ENCODE measurements at regions of chr12 and their contacts with region 1.

Region 1: DNA sequence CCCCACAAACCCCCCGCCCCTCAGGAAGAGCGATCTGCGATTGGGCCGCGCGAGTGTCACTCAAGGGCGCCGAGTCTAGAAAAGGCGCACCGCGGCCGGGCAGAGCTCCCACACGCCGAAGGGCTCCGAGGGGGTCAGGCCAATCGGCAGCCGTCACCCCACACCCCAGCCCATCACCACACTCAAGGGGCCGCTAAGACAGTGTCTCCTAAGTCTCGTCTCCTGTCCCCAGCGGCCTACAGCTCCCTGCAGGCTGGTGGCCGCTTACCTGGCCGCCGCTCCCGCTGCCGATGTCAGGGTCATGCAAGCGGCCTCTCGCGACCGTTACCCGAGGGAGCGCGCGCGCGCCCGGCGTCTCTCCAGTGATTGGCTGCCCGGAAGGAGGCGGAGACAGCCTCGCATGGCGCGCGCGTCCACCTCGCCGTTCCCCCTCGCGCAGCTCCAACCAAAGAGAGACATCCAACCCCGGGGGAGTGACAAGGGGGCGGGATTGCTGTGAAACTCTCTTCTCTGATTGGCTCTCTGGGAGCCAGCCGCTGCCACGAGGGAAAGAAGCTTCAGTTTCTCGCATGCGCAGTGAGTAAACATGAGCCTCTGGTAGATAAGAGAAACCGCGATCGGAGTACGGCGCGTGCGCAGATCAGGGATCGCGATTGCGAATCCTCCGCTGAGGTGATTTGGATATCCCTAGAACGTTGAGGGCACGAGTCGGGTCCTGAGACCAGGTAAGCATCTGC is at the starts of genes MPHOSPH9 and MTRFR:
- DNase-seq: peak; percentile 100
- H3K4me3 Mint-ChIP-seq: peak within 1 kb of the TSS; percentile 84
- H3K27ac Mint-ChIP-seq: peak within 1 kb of the TSS; percentile 82
- H3K4me1 Mint-ChIP-seq: peaks cover 24% of the 10 kb centered on the region
- H3K27me3 Mint-ChIP-seq: no peaks in the 10 kb centered on the region
- CTCF ChIP-seq: no peak
- total RNA-seq, gene MPHOSPH9: 27.5 and 40.4 TPM in 2 replicates
- total RNA-seq, gene MTRFR: 21.9 and 26.5 TPM in 2 replicates

Region 2: DNA sequence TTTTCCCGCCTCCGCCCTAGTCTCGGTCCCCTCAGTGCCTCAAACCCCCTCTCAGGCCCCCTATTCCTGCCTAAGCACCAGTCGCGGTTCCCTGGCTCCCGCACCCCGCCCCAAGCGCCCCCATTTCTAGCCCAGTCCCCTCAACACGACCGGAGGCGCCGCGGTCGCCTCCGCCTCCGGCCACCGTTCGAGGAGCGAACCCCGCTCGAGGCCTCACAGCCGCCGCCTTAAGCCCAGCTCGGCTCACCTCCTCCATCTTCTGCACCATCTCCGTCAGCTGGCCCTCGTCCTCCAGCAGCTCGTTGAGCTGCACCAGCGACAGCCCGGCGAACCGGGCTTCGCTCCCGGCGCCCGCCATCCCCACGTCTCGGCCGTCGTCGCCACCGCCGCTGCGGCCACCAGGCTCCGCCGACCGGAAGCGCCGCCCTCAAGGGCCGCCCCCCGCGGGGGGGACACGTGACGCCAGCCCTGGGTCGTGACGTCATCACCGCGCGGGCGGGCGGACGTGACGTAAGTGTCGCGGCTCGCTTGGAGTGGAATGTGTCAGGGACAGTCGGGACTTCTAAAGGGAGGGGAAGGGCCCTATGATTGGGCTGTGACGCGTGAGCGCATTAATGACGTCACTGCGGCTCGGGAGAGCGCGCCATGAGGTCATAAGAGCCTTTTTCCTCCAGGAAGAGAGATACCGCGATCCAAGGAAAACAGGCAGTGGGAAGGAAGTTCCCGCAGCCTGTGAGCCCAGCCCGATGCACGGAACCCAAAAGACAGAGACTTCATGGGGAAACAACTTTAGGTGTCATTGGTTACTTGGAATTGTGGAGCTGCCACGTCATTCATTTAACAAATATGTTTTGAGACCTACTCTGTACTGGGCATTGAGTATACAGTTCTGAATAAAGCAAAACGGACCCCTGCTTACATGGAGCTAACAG is 337.0 kb before region 1 on chr12 and contains the start of gene VPS37B:
- CTCF ChIA-PET with region 1: interaction called, 3 read pairs
- POLR2A ChIA-PET with region 1: interaction called, 13 read pairs
- intact Hi-C with region 1: no loop called
- DNase-seq: peak; percentile 63
- H3K4me3 Mint-ChIP-seq: peak within 1 kb of the TSS; percentile 88
- H3K27ac Mint-ChIP-seq: peak within 1 kb of the TSS; percentile 91
- H3K4me1 Mint-ChIP-seq: peaks cover 35% of the 10 kb centered on the region
- H3K27me3 Mint-ChIP-seq: no peaks in the 10 kb centered on the region
- CTCF ChIP-seq: no peak
- total RNA-seq, gene VPS37B: 33.8 and 37.6 TPM in 2 replicates

Region 3: GRCh38 chr12:122974274-122974891 is 258.6 kb before region 1 on chr12:
- CTCF ChIA-PET with region 1: interaction called, 8 read pairs
- POLR2A ChIA-PET with region 1: interaction called, 45 read pairs
- intact Hi-C with region 1: loop called (anchors 5 kb)
- DNase-seq: peak; percentile 99
- H3K4me3 Mint-ChIP-seq: peak overlapping the region; percentile 94
- H3K27ac Mint-ChIP-seq: peak overlapping the region; percentile 95
- H3K4me1 Mint-ChIP-seq: peaks cover 5% of the 10 kb centered on the region
- H3K27me3 Mint-ChIP-seq: no peaks in the 10 kb centered on the region
- CTCF ChIP-seq: no peak

Region 4: GRCh38 chr12:123043536-123044001 is 189.4 kb before region 1 on chr12:
- CTCF ChIA-PET with region 1: interaction called, 26 read pairs
- POLR2A ChIA-PET with region 1: interaction called, 4 read pairs
- intact Hi-C with region 1: loop called (anchors 1 kb)
- DNase-seq: peak; percentile 73
- H3K4me3 Mint-ChIP-seq: no peak overlapping the region
- H3K27ac Mint-ChIP-seq: no peak overlapping the region
- H3K4me1 Mint-ChIP-seq: no peaks in the 10 kb centered on the region
- H3K27me3 Mint-ChIP-seq: no peaks in the 10 kb centered on the region
- CTCF ChIP-seq: peak; percentile 60

Region 5: DNA sequence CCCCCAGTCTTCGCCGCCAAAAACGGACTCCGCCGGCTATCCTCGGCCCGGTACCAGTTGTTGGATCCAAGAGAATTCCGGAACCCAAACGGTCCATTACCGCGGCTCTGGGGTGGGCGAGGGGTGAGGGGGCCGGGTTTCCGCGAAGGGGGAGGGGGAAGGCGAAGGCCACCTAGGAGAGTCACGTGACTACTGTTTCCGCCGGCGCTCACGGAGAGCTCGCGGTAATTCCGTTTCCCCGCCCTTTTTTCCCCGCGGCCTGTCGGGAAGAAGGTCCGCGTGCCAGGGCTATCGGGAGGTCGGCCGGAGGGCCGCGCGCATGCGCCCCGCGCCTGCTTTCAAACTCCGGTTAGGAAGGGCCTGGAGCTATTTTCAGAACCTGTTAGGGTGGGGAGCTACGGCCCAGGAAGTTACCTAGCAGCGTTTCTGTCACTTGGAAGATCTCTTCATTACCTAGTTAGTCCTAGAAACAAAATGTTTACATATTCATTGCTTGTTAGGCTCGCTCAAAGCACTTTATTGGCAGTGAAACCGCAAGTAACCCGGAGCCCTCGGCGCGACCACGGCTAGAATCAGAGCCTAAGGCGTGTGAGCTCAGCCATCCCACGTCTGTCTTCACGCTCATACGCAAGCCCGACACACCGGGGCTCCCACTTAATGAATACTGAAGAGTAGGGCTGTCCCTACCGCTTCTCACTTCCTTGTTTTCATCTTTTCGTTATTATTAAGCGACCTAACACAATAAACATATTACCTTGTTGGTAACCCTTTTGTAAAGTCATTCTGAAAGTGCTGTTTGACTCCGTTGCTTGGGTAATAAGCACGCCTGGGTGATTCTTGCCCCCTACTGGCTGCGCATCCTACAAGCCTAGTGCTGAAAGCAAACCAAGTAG is 132.3 kb after region 1 on chr12:
- CTCF ChIA-PET with region 1: interaction called, 7 read pairs
- POLR2A ChIA-PET with region 1: interaction called, 25 read pairs
- intact Hi-C with region 1: no loop called
- DNase-seq: peak; percentile 98
- H3K4me3 Mint-ChIP-seq: peak overlapping the region; percentile 85
- H3K27ac Mint-ChIP-seq: peak overlapping the region; percentile 94
- H3K4me1 Mint-ChIP-seq: no peaks in the 10 kb centered on the region
- H3K27me3 Mint-ChIP-seq: no peaks in the 10 kb centered on the region
- CTCF ChIP-seq: peak; percentile 59

Region 6: DNA sequence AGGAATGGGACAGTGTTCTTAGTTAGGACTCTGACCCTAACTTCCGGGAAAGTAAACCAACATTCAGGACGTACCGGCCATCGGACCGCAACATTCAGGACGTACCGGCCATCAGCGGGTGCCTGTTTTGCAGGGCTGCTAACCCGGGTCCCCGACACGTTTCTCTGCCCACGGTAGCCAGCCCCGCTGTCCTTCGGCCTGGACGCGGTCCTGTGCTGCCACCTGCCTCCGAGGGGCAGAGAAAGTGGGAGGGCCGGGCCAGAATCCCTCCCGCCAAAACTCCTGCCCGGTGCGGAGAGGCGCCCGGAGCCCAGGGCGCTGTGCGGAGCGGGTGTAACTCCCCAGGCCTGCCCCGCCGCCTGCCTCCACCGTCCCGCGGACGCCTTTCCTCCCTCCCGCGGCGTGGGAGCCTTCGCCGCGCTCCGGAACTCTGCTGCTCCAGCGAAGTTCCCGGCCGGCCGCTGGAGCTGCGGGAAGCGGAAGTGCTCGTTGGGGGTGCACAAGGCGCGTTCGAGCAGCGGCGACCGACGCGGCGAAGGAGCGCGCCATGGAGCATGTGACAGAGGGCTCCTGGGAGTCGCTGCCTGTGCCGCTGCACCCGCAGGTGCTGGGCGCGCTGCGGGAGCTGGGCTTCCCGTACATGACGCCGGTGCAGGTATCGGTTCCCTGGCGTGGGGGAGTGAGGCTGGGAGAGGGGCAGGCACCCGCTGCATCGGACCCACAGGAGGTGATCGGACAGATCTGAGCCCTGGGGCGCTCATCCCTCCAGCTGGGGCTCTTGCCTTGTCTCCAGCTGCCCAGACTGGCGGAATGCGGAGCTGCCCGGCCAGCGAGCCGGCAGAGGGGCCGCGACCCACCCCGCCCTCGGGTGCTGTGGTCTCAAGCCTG is 368.9 kb after region 1 on chr12 and contains the start of gene DDX55:
- CTCF ChIA-PET with region 1: interaction called, 4 read pairs
- POLR2A ChIA-PET with region 1: interaction called, 18 read pairs
- intact Hi-C with region 1: no loop called
- DNase-seq: peak; percentile 82
- H3K4me3 Mint-ChIP-seq: peak within 1 kb of the TSS; percentile 98
- H3K27ac Mint-ChIP-seq: peak within 1 kb of the TSS; percentile 92
- H3K4me1 Mint-ChIP-seq: peaks cover 23% of the 10 kb centered on the region
- H3K27me3 Mint-ChIP-seq: no peaks in the 10 kb centered on the region
- CTCF ChIP-seq: peak; percentile 42
- total RNA-seq, gene DDX55: 28.4 and 30.5 TPM in 2 replicates

Measured in MCF 10A (cell line).